Ovary (tissue), 10 donors: ENCODE measurements at regions of chr9 and their contacts with region 1.

Region 1: GRCh38 chr9:27933210-27934025 is 360.1 kb upstream of the C9orf72 start:
- DNase-seq: no peak
- H3K4me3 ChIP-seq: no peak overlapping the region
- H3K27ac ChIP-seq: no peak overlapping the region
- H3K4me1 ChIP-seq: no peaks in the 10 kb centered on the region
- H3K27me3 ChIP-seq: no peaks in the 10 kb centered on the region
- CTCF ChIP-seq: no peak
- EP300 ChIP-seq: no peak
- POLR2A ChIP-seq: no peak

Region 2: DNA sequence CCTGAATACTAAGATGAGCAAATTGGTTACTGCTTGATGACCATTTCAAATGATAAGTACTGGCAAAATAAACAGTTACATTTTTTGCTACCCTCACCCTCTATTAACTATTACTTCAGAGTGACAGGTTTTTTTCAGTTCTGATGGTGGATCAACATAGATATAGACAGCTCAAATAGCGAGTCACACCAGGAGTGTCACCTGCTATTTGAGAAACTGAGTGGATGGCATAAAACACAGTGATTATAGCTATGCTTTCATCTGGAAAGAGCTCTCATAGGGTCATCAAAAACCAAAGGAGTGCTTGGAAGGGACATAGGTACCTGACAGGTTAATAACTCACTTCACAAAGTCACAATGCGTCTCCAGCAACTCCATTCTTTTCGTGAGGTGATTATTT is 115.7 kb before region 1 on chr9:
- intact Hi-C with region 1: no loop called
- DNase-seq: no peak
- H3K4me3 ChIP-seq: no peak overlapping the region
- H3K27ac ChIP-seq: no peak overlapping the region
- H3K4me1 ChIP-seq: no peaks in the 10 kb centered on the region
- H3K27me3 ChIP-seq: no peaks in the 10 kb centered on the region
- CTCF ChIP-seq: no peak
- EP300 ChIP-seq: no peak
- POLR2A ChIP-seq: no peak

Region 3: DNA sequence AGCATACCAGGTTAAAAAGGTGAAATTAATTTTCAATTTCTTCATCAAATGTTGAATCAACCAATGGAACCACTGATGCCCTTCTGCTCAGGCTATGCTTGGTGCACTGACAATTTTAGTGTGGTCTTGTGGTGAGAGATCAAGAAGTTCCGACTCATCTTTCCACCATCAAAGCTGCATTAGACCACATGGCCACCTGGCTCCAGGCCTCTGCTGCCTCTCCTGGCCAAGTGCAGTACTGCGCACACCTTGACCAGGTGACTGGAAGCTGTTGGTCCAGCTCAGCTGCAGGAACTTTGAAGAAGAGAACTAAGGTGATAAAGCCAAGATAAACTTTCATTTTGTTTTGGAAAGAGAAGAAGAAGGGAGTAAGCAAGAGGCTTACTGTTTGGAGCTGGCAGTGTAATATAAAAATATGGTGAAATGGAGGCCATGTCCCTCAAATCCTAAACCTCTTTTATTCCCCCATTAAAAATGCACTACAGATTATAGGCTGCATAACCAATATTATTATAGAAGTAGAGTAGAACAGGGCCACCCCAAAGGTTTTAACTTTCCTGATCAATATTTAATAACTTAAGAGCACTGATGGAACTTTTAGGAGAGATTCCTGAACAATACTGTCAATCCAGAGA is 44.6 kb before region 1 on chr9:
- intact Hi-C with region 1: loop called in 1 of 4 experiments (anchors 10 kb)
- DNase-seq: no peak
- H3K4me3 ChIP-seq: no peak overlapping the region
- H3K27ac ChIP-seq: no peak overlapping the region
- H3K4me1 ChIP-seq: no peaks in the 10 kb centered on the region
- H3K27me3 ChIP-seq: no peaks in the 10 kb centered on the region
- CTCF ChIP-seq: no peak
- EP300 ChIP-seq: no peak
- POLR2A ChIP-seq: no peak

Region 4: DNA sequence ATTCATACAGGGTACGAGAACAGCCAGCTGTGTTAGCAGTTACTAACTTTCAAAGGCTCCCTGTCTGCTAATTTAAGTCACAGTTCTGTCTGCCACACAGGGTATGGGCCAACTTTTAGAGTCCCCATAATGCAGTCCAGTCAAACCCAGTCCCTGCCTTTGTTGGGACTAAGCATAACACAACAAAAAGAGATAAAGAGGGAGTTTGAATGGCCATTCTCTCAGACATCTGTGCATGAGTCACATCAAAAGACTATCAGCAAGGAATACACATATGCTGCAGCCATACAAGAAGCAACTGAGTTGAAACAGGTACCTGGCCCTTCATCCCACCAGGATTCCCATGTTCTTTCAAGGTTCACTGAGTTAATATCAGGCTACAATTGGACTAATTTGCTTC is 384.3 kb after region 1 on chr9:
- intact Hi-C with region 1: no loop called
- DNase-seq: no peak
- H3K4me3 ChIP-seq: no peak overlapping the region
- H3K27ac ChIP-seq: no peak overlapping the region
- H3K4me1 ChIP-seq: no peaks in the 10 kb centered on the region
- H3K27me3 ChIP-seq: no peaks in the 10 kb centered on the region
- CTCF ChIP-seq: no peak
- EP300 ChIP-seq: no peak
- POLR2A ChIP-seq: no peak